ENCODE measurements at regions of chr13 and their contacts with region 1.

Region 1: DNA sequence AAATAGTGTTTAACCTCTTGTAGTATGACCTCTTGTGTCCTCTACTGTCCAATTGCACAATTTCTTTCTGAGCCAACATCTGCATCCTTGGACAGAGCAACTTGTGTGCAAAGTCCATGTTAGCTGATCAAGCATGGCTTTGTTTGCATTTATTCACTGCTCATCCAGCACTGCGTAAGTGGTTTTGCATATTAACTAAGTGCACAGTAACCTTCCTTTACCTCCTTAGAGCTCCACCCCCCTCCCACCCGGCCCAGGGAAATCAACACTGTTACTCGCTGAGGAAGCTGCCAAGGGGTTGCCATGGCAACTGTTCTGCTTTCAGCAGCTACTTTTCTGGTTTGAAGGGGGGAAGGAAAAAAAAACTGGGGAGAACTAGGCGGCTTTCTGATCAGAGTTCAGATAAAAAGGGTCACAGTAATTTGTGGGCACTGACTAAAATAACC is 153.5 kb upstream of the KLF12 start:
- DNase-seq: peak; percentile 91
- ATAC-seq: peak; percentile 57
- H3K4me3 Mint-ChIP-seq: peak overlapping the region; percentile 67
- H3K27ac Mint-ChIP-seq: peak overlapping the region; percentile 73
- H3K4me1 Mint-ChIP-seq: peaks cover 66% of the 10 kb centered on the region
- H3K27me3 Mint-ChIP-seq: no peaks in the 10 kb centered on the region
- CTCF ChIP-seq: no peak

Region 2: GRCh38 chr13:73754727-73755292 is 532.9 kb before region 1 on chr13:
- CTCF ChIA-PET with region 1: interaction called, 9 read pairs
- POLR2A ChIA-PET with region 1: no interaction called
- intact Hi-C with region 1: loop called (anchors 10 kb)
- DNase-seq: peak; percentile 12
- ATAC-seq: no peak
- H3K4me3 Mint-ChIP-seq: no peak overlapping the region
- H3K27ac Mint-ChIP-seq: no peak overlapping the region
- H3K4me1 Mint-ChIP-seq: peaks cover 31% of the 10 kb centered on the region
- H3K27me3 Mint-ChIP-seq: no peaks in the 10 kb centered on the region
- CTCF ChIP-seq: peak; percentile 81

Region 3: DNA sequence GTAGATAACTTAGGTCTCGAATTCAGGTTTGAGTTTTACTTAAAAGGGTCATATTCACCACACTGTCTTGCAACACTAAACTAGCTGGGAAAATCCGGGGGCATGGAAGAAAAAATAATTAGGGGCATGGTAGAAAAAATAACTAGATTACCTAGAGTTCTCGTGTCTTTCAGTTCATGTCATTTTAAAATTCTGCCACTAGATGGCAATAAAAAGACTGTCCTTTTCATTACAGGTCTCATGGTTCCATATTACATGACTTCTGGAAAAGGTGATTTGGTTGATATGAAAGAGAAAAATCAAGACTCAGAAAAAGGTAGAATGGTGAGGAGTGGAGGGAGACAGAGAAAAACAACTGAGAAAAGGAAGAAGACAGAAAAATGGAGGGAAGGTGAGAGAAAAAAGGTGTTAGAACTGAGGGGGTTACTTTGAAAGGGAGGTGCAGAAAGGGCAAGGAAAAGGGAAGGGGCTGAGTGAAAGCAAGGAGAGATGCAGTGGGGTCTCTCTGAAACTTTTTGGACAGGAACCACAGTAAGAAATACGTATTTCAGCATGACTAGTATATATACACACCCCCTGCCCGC is 452.5 kb before region 1 on chr13:
- CTCF ChIA-PET with region 1: interaction called, 12 read pairs
- POLR2A ChIA-PET with region 1: no interaction called
- intact Hi-C with region 1: loop called (anchors 1 kb)
- DNase-seq: no peak
- ATAC-seq: peak; percentile 64
- H3K4me3 Mint-ChIP-seq: no peak overlapping the region
- H3K27ac Mint-ChIP-seq: no peak overlapping the region
- H3K4me1 Mint-ChIP-seq: peaks cover 38% of the 10 kb centered on the region
- H3K27me3 Mint-ChIP-seq: no peaks in the 10 kb centered on the region
- CTCF ChIP-seq: peak; percentile 87

Region 4: GRCh38 chr13:74230984-74231501 is 56.7 kb before region 1 on chr13:
- CTCF ChIA-PET with region 1: interaction called, 23 read pairs
- POLR2A ChIA-PET with region 1: interaction called, 3 read pairs
- intact Hi-C with region 1: no loop called
- DNase-seq: peak; percentile 28
- ATAC-seq: peak; percentile 91
- H3K4me3 Mint-ChIP-seq: peak overlapping the region; percentile 75
- H3K27ac Mint-ChIP-seq: peak overlapping the region; percentile 91
- H3K4me1 Mint-ChIP-seq: peaks cover 45% of the 10 kb centered on the region
- H3K27me3 Mint-ChIP-seq: no peaks in the 10 kb centered on the region
- CTCF ChIP-seq: no peak

Region 5: GRCh38 chr13:74251778-74252519 is 35.8 kb before region 1 on chr13:
- CTCF ChIA-PET with region 1: interaction called, 25 read pairs
- POLR2A ChIA-PET with region 1: interaction called, 4 read pairs
- intact Hi-C with region 1: loop called (anchors 5 kb)
- DNase-seq: peak; percentile 38
- ATAC-seq: peak; percentile 34
- H3K4me3 Mint-ChIP-seq: no peak overlapping the region
- H3K27ac Mint-ChIP-seq: peak overlapping the region; percentile 31
- H3K4me1 Mint-ChIP-seq: peaks cover 78% of the 10 kb centered on the region
- H3K27me3 Mint-ChIP-seq: no peaks in the 10 kb centered on the region
- CTCF ChIP-seq: no peak

Region 6: DNA sequence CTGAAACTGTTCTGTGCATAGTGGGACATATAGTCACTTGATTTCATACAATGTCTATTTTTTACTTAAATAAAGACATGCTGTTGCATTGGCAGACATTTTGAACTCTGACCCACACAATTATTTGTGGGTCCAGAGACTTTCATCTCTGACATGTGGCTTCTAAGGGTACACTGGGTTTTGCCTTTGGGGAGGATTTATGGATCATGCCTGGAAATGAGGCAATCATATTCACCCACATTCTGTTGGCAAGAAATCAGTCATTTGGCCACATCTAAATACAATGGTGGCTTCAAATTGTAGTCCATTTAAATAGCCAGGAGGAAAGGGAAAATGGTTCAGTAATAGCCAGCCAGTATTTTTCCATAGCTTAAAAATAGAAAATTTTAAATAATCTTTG is 84.8 kb after region 1 on chr13:
- CTCF ChIA-PET with region 1: no interaction called
- POLR2A ChIA-PET with region 1: no interaction called
- intact Hi-C with region 1: no loop called
- DNase-seq: no peak
- ATAC-seq: no peak
- H3K4me3 Mint-ChIP-seq: no peak overlapping the region
- H3K27ac Mint-ChIP-seq: no peak overlapping the region
- H3K4me1 Mint-ChIP-seq: no peaks in the 10 kb centered on the region
- H3K27me3 Mint-ChIP-seq: no peaks in the 10 kb centered on the region
- CTCF ChIP-seq: no peak

Region 7: DNA sequence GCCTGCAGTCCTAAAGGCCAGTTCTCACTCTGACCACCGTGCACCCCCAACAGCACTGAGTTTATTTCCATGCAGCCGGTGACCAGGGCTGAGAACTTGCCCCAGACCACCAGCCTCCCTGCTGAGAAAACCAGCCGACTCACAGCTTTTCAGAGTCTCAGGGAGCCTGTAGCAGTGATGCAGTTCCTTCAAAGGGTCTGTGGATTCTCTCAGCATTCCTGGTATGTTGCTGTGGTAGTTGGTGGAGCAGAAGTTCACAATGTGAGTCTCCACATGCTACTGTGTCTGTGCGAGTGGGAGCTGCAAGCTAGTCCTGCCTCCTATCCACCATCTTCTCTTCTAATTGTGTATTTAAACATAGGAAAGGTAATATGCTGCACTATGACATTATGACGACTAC is 101.3 kb after region 1 on chr13:
- CTCF ChIA-PET with region 1: no interaction called
- POLR2A ChIA-PET with region 1: no interaction called
- intact Hi-C with region 1: no loop called
- DNase-seq: no peak
- ATAC-seq: no peak
- H3K4me3 Mint-ChIP-seq: no peak overlapping the region
- H3K27ac Mint-ChIP-seq: no peak overlapping the region
- H3K4me1 Mint-ChIP-seq: no peaks in the 10 kb centered on the region
- H3K27me3 Mint-ChIP-seq: no peaks in the 10 kb centered on the region
- CTCF ChIP-seq: no peak

Region 8: GRCh38 chr13:74523057-74523456 is 235.3 kb after region 1 on chr13:
- CTCF ChIA-PET with region 1: no interaction called
- POLR2A ChIA-PET with region 1: no interaction called
- intact Hi-C with region 1: no loop called
- DNase-seq: no peak
- ATAC-seq: no peak
- H3K4me3 Mint-ChIP-seq: no peak overlapping the region
- H3K27ac Mint-ChIP-seq: no peak overlapping the region
- H3K4me1 Mint-ChIP-seq: no peaks in the 10 kb centered on the region
- H3K27me3 Mint-ChIP-seq: no peaks in the 10 kb centered on the region
- CTCF ChIP-seq: no peak

Measured in activated CD8-positive, alpha-beta T cell treated with anti-CD3 and anti-CD28 coated beads for 36 hours (primary cell).